HCT116 (cell line): ENCODE measurements at regions of chr19 and their contacts with region 1.

Region 1: GRCh38 chr19:47391510-47392223 is 27.7 kb downstream of the MEIS3 start:
- DNase-seq: peak; percentile 49
- ATAC-seq: peak; percentile 97
- H3K4me3 ChIP-seq: no peak overlapping the region
- H3K27ac ChIP-seq: no peak overlapping the region
- H3K4me1 ChIP-seq: peaks cover 0 to 2% of the 10 kb centered on the region in 2 experiments; a peak in 1 of 4 replicates
- H3K27me3 ChIP-seq: no peaks in the 10 kb centered on the region
- CTCF ChIP-seq: peak; percentile 77 to 93 (median 89)
- POLR2A ChIP-seq: no peak
- RAD21 ChIP-seq: peak; percentile 85

Region 2: DNA sequence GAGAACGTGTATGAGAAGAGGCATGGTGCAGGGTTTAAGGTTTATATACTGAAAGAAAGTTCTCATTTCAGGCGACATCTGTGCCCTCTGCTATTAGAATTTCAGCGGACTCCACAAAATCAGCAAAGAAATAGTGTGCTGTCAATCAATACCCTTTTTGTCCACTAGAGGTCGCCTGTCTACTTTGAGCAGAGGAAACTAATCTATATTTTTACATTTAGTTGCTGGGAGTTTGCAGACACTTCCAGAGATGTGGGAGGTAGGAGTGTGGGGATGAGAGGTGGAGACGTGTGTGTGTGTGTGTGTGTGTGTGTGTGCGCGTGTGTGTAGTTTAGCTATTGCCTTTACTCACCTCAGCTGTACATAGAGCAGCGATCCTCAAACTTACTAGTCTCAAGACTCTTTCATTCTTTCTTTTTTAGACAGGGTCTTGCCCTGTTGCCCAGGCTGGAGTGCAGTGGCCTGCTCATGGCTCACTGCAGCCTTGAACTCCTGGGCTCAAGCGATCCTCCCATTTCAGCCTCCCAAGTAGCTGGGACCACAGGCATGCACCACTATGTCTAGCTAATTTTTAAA is 107.3 kb before region 1 on chr19:
- CTCF ChIA-PET with region 1: interaction called, 6 read pairs
- POLR2A ChIA-PET with region 1: no interaction called
- RAD21 ChIA-PET with region 1: no interaction called
- intact Hi-C with region 1: loop called (anchors 2 kb)
- DNase-seq: no peak
- ATAC-seq: peak; percentile 26; the same call in 1 of the 2 replicates
- H3K4me3 ChIP-seq: no peak overlapping the region
- H3K27ac ChIP-seq: no peak overlapping the region
- H3K4me1 ChIP-seq: peaks cover 13 to 26% of the 10 kb centered on the region in 2 experiments
- H3K27me3 ChIP-seq: no peaks in the 10 kb centered on the region
- CTCF ChIP-seq: peak; percentile 72 to 94 (median 76); a peak in 5 of 6 replicates
- POLR2A ChIP-seq: no peak
- RAD21 ChIP-seq: peak; percentile 79

Region 3: GRCh38 chr19:47296036-47296435 is 95.6 kb before region 1 on chr19:
- CTCF ChIA-PET with region 1: interaction called, 6 read pairs
- POLR2A ChIA-PET with region 1: no interaction called
- RAD21 ChIA-PET with region 1: no interaction called
- intact Hi-C with region 1: loop called (anchors 1 kb)
- DNase-seq: peak; percentile 79
- ATAC-seq: peak; percentile 99
- H3K4me3 ChIP-seq: no peak overlapping the region
- H3K27ac ChIP-seq: no peak overlapping the region
- H3K4me1 ChIP-seq: peaks cover 0 to 1% of the 10 kb centered on the region in 2 experiments; a peak in 2 of 4 replicates
- H3K27me3 ChIP-seq: no peaks in the 10 kb centered on the region
- CTCF ChIP-seq: peak; percentile 69 to 89 (median 80)
- POLR2A ChIP-seq: no peak
- RAD21 ChIP-seq: peak; percentile 94